ENCODE measurements at regions of chr7 and their contacts with region 1.

Region 1: DNA sequence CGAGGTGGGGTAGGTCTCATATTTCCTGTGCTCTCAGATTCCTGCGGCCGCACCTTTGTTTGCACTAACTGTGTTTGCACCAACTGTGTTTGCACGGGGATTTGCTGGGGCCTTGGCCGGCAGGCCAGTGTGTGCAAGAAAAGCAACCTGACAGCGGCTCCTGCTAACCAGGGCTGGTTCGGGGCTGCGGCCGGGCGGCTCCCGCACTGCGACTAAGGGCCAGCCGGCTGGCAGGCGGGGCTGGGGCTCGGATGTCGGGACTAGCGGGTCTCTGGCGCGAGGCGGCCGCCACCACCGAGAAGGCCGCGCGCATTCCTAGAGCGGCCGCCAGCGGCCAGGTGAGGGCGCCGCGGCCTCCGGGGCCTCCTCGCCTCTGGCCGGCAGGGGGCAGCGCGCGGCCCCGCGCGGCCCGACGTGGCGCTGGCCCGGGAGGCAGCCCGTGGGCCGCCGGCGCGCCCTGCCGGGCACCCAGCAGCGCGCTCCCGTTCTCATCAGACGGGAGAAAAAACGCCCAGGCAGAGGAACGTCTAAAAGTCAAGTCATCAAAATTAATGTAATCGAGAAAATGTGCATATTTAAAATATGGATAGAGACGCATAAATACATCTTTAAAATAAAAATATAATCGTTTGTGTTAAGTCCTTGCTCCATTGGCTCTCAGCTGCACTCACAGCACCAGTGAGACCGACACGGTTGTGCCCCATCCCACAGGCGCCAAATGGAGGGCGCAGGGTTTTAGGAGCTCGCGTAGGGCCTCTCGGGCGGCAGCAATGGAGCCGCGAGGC is 38.5 kb downstream of the ZNF777 start:
- DNase-seq: peak; percentile 73
- H3K4me3 Mint-ChIP-seq: peak overlapping the region; percentile 66
- H3K27ac Mint-ChIP-seq: peak overlapping the region; percentile 61
- H3K4me1 Mint-ChIP-seq: no peaks in the 10 kb centered on the region
- H3K27me3 Mint-ChIP-seq: peaks cover 4% of the 10 kb centered on the region

Region 2: DNA sequence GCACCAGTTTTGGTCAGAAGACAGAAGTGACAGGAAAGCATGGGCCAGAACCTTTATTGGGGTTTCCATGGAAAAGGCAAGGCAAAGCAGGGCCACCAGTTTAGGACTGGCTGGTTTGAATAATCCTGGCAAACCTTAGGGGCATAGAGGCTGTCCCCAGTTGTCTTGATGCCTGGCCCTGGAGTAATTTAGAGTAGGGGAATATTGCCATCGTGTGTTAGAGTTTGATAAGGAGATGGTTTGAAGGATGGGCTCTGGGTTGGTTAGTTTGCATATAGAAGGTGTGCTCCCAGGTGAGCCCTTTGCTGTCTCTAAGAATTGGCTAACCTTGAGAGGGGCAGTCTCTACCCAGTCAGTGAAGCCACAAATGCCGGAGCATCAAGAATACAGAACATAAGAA is 41.1 kb before region 1 on chr7:
- intact Hi-C with region 1: no loop called
- DNase-seq: no peak
- H3K4me3 Mint-ChIP-seq: no peak overlapping the region
- H3K27ac Mint-ChIP-seq: no peak overlapping the region
- H3K4me1 Mint-ChIP-seq: no peaks in the 10 kb centered on the region
- H3K27me3 Mint-ChIP-seq: no peaks in the 10 kb centered on the region

Region 3: DNA sequence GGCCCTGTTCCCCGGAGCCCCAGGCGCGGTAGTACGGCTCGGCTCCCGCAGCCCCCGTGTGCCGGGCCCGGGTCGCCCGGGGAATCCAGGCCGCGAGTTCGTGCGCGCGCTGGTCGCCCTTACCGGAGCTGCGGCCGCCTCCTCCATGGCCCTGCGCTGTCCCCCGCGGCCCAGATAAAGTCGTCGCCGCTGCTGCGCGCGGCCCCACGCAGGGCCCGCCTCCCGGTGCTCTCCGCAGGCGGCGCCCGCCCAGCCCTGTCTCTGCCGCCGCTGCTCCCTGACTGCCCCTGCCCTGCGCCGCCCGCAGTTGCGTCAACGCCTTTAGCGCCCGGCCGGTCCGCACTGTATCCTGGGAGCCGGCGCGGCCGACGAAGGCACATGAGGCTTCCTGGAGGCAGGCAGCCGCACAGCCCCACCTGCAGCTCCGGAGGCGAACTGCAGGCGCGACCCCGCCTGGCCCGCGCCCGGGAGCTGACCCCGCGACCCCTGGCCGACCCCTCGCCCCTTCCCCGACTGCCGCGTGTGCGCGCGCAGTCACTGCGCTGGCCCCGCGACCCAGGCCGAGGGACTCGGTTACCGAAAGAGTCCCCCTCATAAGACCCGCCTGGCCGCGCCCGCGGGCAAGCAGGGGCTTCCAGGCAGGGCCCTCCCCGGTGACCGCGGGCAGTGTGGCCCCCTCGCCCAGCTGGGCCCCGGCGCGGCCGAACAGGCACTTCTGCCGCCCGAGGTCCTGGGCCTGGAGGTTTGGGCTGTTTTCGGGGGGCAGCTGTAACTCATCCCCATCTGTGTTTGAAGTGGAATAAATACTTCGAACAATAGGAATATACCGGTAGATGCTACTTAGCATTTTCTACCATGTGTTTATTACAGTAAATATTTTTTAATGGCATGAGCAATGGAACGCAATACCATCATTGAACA is 202.4 kb after region 1 on chr7:
- intact Hi-C with region 1: loop called (anchors 1 kb)
- DNase-seq: peak; percentile 91
- H3K4me3 Mint-ChIP-seq: peak overlapping the region; percentile 89
- H3K27ac Mint-ChIP-seq: peak overlapping the region; percentile 83
- H3K4me1 Mint-ChIP-seq: peaks cover 32% of the 10 kb centered on the region
- H3K27me3 Mint-ChIP-seq: peaks cover 6% of the 10 kb centered on the region

Region 4: DNA sequence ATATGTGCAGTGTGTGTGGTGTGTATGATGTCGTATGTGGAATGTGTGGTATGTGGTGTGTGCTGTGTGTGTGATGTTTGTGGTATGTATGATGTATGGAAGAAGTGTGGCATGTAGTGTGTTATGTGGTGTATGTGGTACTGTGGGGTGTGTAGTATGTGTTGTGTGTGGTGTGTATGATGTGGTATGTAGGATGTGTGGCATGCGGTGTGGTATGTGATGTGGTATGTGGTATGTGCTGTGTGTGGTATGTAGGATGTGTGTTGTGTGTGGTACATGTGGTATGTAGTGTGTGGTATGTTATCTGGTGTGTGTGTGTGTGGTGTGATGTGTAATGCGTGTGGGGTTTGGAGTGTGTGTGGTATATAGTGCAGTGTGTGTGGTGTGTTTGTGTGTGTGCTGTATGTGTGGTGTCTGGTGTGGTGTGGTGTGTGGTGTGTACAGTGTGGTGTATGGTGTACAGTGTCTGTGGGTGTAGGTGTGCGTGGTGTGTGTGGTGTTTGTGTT is 581.0 kb after region 1 on chr7:
- intact Hi-C with region 1: no loop called
- DNase-seq: no peak
- H3K4me3 Mint-ChIP-seq: no peak overlapping the region
- H3K27ac Mint-ChIP-seq: no peak overlapping the region
- H3K4me1 Mint-ChIP-seq: no peaks in the 10 kb centered on the region
- H3K27me3 Mint-ChIP-seq: no peaks in the 10 kb centered on the region